Activated CD4-positive, alpha-beta memory T cell treated with anti-CD3 and anti-CD28 coated beads, Interleukin-2, amount 10 ng/mL, durations not matched to agents 7 days and 5 days (primary cell): ENCODE measurements at regions of chr5 and their contacts with region 1.

Region 1: GRCh38 chr5:52948418-52949076 is 40.6 kb upstream of the ITGA2 start:
- DNase-seq: peak; percentile 78
- H3K4me3 Mint-ChIP-seq: no peak overlapping the region
- H3K27ac Mint-ChIP-seq: peak overlapping the region; percentile 2
- H3K4me1 Mint-ChIP-seq: peaks cover 25% of the 10 kb centered on the region
- H3K27me3 Mint-ChIP-seq: peaks cover 2% of the 10 kb centered on the region

Region 2: DNA sequence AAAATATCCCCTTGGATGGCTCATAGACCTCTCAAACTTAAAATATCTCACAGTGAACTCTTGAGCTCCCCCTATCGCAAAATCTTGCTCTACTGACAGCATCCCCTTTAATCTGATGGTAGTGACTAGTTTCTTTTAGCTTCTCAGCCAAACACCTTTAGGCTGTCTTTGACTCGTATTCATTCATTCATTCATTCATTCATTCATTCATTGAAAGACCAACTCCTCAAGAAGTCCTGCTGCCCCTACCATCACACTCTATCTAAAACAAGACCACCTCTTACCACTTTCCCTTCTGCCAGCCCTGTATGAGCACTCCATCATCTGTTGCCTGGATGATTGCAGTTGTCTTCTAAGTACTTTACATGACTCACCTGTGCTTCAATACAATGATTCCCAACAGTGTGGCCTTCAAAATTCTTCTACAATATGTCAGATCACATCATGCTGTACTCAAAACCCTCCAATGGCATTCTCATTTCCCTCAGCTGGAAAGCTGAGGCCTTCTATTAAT is 87.4 kb after region 1 on chr5:
- CTCF ChIA-PET with region 1: interaction called, 13 read pairs
- POLR2A ChIA-PET with region 1: interaction called, 6 read pairs
- DNase-seq: no peak
- H3K4me3 Mint-ChIP-seq: no peak overlapping the region
- H3K27ac Mint-ChIP-seq: no peak overlapping the region
- H3K4me1 Mint-ChIP-seq: peaks cover 77% of the 10 kb centered on the region
- H3K27me3 Mint-ChIP-seq: no peaks in the 10 kb centered on the region

Region 3: GRCh38 chr5:53069626-53070025 is 121.1 kb after region 1 on chr5:
- CTCF ChIA-PET with region 1: interaction called, 16 read pairs
- POLR2A ChIA-PET with region 1: interaction called, 3 read pairs
- DNase-seq: peak; percentile 82
- H3K4me3 Mint-ChIP-seq: peak overlapping the region; percentile 1
- H3K27ac Mint-ChIP-seq: peak overlapping the region; percentile 70
- H3K4me1 Mint-ChIP-seq: peaks cover 29% of the 10 kb centered on the region
- H3K27me3 Mint-ChIP-seq: no peaks in the 10 kb centered on the region

Region 4: GRCh38 chr5:53095931-53096525 is 147.5 kb after region 1 on chr5:
- CTCF ChIA-PET with region 1: interaction called, 133 read pairs
- POLR2A ChIA-PET with region 1: interaction called, 19 read pairs
- DNase-seq: peak; percentile 78
- H3K4me3 Mint-ChIP-seq: no peak overlapping the region
- H3K27ac Mint-ChIP-seq: no peak overlapping the region
- H3K4me1 Mint-ChIP-seq: peaks cover 5% of the 10 kb centered on the region
- H3K27me3 Mint-ChIP-seq: no peaks in the 10 kb centered on the region

Region 5: DNA sequence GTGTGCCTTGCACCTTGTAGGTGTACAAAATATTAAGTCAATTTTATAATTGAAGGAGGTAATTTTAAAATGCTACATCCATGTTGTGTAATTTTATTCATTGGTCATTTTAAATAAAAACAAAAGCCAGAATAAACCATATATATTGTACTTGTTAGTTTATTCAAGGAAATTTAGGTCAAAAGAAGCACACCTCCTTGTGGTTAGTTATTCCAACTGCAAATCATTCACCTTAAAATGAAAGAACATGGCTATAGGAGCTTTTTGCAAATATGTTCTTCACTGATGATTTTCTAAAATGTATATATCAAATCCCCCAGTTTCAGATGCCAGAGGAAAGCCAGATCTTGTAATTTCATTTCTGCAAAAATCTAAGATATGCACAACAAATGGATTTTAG is 166.4 kb after region 1 on chr5:
- CTCF ChIA-PET with region 1: interaction called, 21 read pairs
- POLR2A ChIA-PET with region 1: interaction called, 3 read pairs
- DNase-seq: no peak
- H3K4me3 Mint-ChIP-seq: no peak overlapping the region
- H3K27ac Mint-ChIP-seq: no peak overlapping the region
- H3K4me1 Mint-ChIP-seq: peaks cover 12% of the 10 kb centered on the region
- H3K27me3 Mint-ChIP-seq: no peaks in the 10 kb centered on the region